GM12878 (cell line): ENCODE measurements at regions of chr3 and their contacts with region 1.

Region 1: GRCh38 chr3:172461530-172462138 is 13.4 kb upstream of the GHSR start:
- DNase-seq: no peak
- ATAC-seq: peak; percentile 84
- H3K4me3 ChIP-seq: no peak overlapping the region
- H3K27ac ChIP-seq: no peak overlapping the region
- H3K4me1 ChIP-seq: no peaks in the 10 kb centered on the region
- H3K27me3 ChIP-seq: no peaks in the 10 kb centered on the region; a peak in 2 of 4 replicates
- CTCF ChIP-seq: peak; percentile 68 to 93 (median 91)
- EP300 ChIP-seq: no peak
- POLR2A ChIP-seq: no peak
- RAD21 ChIP-seq: peak; percentile 59

Region 2: DNA sequence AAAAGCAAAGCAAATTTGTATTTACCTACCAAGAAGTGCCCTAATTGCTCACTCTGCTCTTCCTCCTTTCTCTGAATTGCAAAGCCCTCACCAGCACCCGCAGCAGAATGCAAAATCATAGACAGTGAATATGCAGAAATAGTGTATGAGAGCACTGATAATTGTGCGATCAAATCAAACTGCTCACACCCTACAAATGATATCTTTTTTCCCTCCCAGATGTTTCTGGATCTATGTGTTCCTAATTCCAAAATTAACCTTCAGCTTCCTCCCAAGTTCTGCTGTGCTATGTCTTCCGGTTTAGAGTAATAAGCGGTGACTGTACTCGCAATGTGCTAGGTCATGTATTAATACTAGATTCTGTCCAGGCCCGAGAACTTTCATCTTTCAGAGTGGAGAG is 16.8 kb before region 1 on chr3:
- CTCF ChIA-PET with region 1: interaction called, 13 read pairs
- POLR2A ChIA-PET with region 1: no interaction called
- RAD21 ChIA-PET with region 1: no interaction called
- SMC1A ChIA-PET with region 1: no interaction called
- in situ Hi-C with region 1: no loop called
- intact Hi-C with region 1: no loop called
- DNase-seq: no peak
- ATAC-seq: no peak
- H3K4me3 ChIP-seq: no peak overlapping the region
- H3K27ac ChIP-seq: no peak overlapping the region
- H3K4me1 ChIP-seq: no peaks in the 10 kb centered on the region
- H3K27me3 ChIP-seq: peaks cover 17 to 25% of the 10 kb centered on the region in 2 experiments
- CTCF ChIP-seq: no peak
- EP300 ChIP-seq: no peak
- POLR2A ChIP-seq: no peak
- RAD21 ChIP-seq: no peak

Region 3: DNA sequence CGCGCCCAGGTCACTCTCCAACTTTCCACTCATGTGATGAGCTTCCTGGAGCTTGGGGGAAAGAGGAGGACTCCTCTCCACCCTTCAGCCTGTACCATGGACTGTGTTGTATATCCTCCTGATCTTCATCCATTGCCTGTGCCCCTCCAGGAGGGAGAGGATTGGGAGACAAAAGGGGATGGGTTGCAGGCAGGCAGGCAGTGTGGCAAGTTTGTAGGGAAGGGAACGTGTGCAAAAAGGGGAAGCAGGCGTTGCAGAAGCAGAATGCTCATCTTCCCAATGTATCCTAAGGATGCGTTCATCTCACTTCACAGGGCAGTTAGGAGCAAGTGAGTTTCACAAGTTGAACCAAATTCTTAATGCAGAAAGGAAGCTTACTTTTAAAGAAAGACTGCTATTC is 14.7 kb after region 1 on chr3:
- CTCF ChIA-PET with region 1: interaction called, 39 read pairs
- POLR2A ChIA-PET with region 1: no interaction called
- RAD21 ChIA-PET with region 1: interaction called, 8 read pairs
- SMC1A ChIA-PET with region 1: interaction called, 12 read pairs
- in situ Hi-C with region 1: no loop called
- intact Hi-C with region 1: no loop called
- DNase-seq: no peak
- ATAC-seq: no peak
- H3K4me3 ChIP-seq: no peak overlapping the region
- H3K27ac ChIP-seq: no peak overlapping the region
- H3K4me1 ChIP-seq: peaks cover 9% of the 10 kb centered on the region; the same call in 1 of the 2 replicates
- H3K27me3 ChIP-seq: no peaks in the 10 kb centered on the region
- CTCF ChIP-seq: no peak
- EP300 ChIP-seq: no peak
- POLR2A ChIP-seq: no peak
- RAD21 ChIP-seq: no peak

Region 4: DNA sequence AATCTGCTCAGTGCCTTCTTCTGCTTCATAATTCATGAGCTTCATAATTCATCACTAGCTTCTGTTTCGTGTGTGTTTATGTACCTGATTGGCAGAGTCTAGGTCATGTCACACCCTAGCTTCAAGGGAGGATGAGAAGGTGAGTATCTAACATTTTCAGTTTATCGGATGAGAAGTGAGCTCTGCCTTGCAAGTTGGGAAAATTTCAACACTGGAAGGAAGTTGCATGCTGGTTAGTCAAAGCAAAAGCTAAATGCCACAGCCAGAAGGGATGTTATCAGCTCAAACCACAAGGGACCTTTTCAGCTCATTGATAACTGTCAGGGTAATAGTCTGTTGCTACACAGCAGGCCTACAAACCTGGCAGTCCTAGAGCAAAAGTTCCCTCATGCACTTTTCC is 68.9 kb after region 1 on chr3:
- CTCF ChIA-PET with region 1: no interaction called
- POLR2A ChIA-PET with region 1: no interaction called
- RAD21 ChIA-PET with region 1: no interaction called
- SMC1A ChIA-PET with region 1: no interaction called
- in situ Hi-C with region 1: no loop called
- intact Hi-C with region 1: no loop called
- DNase-seq: no peak
- ATAC-seq: peak; percentile 70
- H3K4me3 ChIP-seq: no peak overlapping the region
- H3K27ac ChIP-seq: no peak overlapping the region
- H3K4me1 ChIP-seq: no peaks in the 10 kb centered on the region
- H3K27me3 ChIP-seq: no peaks in the 10 kb centered on the region
- CTCF ChIP-seq: no peak
- EP300 ChIP-seq: no peak
- POLR2A ChIP-seq: no peak
- RAD21 ChIP-seq: no peak